ENCODE measurements at regions of chr14 and their contacts with region 1.

Region 1: DNA sequence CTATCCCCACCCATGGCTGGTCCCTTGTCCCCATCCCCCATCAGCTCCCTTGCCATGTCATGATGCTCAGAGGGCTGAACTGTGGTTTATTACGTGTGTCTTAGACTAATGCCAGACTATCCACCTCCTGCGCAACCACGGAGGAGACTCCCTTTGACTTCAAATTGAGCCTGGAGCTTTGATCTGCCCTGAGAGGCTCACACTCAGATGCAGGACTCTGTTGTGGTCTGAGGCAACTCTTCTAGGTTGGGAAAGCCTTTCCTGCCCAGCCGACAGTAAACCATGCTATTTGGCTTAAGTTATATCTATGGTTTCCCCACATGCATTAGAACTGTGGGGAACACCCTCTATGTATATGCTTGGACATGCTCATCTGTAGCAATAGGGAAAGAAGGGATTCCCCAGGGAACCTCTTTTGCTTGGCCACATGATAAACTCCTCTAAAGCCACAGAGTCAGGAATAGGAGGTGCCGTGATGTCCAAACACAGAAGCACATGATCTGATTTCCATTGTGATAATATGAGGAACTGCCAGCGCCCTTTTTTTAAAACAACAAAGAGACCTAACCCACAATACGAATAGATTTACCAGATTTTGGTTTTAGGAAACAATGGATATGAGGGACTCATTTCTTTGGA is 11.1 kb upstream of the LGALS3 start:
- DNase-seq: peak; percentile 33
- H3K4me3 ChIP-seq: no peak overlapping the region
- H3K27ac ChIP-seq: no peak overlapping the region
- H3K4me1 ChIP-seq: no peaks in the 10 kb centered on the region
- H3K27me3 ChIP-seq: no peaks in the 10 kb centered on the region
- CTCF ChIP-seq: no peak
- POLR2A ChIP-seq: no peak

Region 2: DNA sequence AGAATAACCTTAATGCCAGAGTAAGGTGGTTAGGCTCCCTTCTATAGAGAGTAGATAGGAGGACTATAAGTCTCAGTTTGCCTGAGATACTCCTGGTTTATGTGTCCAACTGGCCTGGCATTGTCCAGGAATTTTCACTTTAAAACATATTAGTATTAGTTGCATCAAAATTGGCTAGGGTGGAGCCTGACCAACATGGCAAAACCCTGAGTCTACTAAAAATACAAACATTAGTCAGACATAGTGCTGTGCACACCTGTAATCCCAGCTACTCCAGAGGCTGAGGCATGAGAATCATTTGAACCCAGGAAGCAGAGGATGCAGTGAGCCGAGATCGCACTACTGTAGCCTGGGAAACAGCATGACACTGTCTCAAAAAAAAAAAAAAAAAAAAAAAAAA is 102.9 kb before region 1 on chr14:
- CTCF ChIA-PET with region 1: no interaction called
- POLR2A ChIA-PET with region 1: no interaction called
- dilution Hi-C with region 1: no loop called
- intact Hi-C with region 1: no loop called
- DNase-seq: no peak
- H3K4me3 ChIP-seq: no peak overlapping the region
- H3K27ac ChIP-seq: no peak overlapping the region
- H3K4me1 ChIP-seq: no peaks in the 10 kb centered on the region
- H3K27me3 ChIP-seq: no peaks in the 10 kb centered on the region
- CTCF ChIP-seq: no peak
- POLR2A ChIP-seq: no peak

Region 3: GRCh38 chr14:55038708-55039107 is 79.2 kb before region 1 on chr14:
- CTCF ChIA-PET with region 1: no interaction called
- POLR2A ChIA-PET with region 1: no interaction called
- dilution Hi-C with region 1: no loop called
- intact Hi-C with region 1: no loop called
- DNase-seq: no peak
- H3K4me3 ChIP-seq: no peak overlapping the region
- H3K27ac ChIP-seq: no peak overlapping the region
- H3K4me1 ChIP-seq: no peaks in the 10 kb centered on the region
- H3K27me3 ChIP-seq: no peaks in the 10 kb centered on the region
- CTCF ChIP-seq: no peak
- POLR2A ChIP-seq: no peak

Region 4: DNA sequence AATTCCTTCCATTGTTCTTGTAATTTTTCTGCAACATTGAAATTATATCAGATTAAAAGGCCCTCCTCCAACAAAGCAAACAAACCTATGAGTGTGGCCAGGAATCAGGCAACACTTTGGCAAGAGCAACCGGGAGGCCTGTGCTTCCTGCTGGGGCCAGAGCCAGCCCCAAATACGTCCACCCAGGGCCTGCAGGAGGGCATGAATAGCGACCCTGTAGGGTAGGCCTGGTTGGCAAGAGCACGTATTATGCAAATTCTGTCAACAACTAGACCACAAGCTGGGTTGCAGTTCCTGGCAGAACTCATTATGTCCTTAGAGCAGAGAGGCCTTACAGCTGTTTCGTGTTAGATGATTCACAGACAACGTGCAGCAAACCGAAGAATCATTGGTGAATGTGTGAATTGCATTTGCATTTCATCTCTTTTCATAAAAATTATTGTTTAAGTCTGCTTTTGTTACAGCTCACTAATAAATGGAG is 15.7 kb before region 1 on chr14:
- CTCF ChIA-PET with region 1: interaction called, 13 read pairs
- POLR2A ChIA-PET with region 1: no interaction called
- dilution Hi-C with region 1: no loop called
- intact Hi-C with region 1: no loop called
- DNase-seq: peak; percentile 98
- H3K4me3 ChIP-seq: no peak overlapping the region
- H3K27ac ChIP-seq: peak overlapping the region; percentile 98
- H3K4me1 ChIP-seq: peaks cover 26% of the 10 kb centered on the region
- H3K27me3 ChIP-seq: no peaks in the 10 kb centered on the region
- CTCF ChIP-seq: no peak
- POLR2A ChIP-seq: peak; percentile 58

Measured in endothelial cell of umbilical vein (primary cell).